PC-9 (cell line): ENCODE measurements at regions of chr2 and their contacts with region 1.

Region 1: DNA sequence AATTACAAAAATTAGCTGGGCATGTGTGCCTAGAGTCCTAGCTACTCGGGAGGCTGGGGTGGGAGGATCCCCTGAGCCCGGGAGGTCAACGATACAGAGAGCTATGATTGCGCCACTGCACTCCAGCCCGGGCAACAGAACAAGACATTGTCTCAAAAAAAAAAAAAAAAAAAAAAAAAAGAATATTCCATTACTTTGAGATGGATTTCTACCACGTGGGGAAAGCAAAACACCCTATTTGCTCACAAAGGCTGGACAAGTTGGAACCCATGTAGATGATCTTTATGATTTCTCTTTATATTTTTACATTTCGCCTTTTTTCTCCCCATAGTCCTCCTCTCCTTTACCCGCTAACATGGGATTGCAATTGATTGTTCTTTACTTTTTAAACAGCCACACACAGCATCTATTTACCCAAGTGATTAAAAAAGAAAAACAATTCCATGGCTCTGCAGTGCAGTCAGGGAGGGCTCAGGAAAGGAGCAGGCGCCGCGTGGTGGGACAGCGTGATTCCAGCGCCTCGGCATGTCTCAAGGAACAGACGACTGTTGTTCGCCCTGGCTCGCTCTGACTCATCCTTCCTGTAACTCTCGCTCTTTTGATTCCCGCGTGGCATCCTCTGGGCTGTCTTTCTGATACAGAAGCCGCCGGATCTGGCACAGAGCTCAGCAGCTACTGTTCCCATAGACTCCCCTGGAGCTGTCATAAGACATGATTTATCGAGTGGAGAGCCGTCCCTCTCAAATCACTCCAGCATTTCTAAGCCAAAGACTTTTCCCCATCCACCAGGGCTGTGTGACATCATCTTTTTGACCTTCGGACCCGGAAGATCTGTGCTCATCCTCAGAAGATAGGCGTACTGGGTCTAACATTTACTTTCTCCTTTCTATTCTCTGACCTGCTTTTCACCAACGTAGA is 230.4 kb upstream of the AGAP1 start:
- DNase-seq: peak; percentile 67 to 73
- H3K4me3 ChIP-seq: peak overlapping the region; percentile 20; the same call in 1 of the 2 replicates
- H3K27ac ChIP-seq: no peak overlapping the region
- H3K4me1 ChIP-seq: peaks cover 23% of the 10 kb centered on the region
- H3K27me3 ChIP-seq: no peaks in the 10 kb centered on the region
- CTCF ChIP-seq: no peak

Region 2: DNA sequence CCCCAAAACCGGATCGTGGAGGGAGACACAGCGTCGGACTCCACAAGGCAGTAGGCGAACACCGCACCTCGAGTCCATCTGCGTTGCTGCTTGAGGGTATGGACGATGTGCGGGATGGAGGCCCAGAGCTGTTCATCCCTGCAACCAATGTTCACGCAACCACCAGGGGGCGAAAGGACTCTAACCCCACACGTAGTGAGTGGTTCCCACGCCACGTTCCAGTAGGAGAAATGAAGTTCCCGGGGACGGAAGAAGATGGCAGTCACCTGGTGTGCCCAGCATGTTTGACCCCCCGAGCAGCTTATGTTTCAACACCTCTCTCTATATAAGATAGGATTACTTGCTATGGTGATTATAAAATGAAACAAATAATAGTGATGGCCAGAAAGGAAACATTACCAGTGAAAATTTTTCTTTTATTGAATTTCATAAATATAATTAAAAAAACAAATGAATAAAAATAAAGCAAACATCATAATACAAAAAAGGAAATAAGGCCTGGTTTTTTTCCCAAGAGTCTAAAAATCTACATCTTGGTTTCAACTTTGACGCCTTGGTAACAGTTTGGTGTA is 127.4 kb before region 1 on chr2:
- CTCF ChIA-PET with region 1: interaction called, 3 read pairs
- POLR2A ChIA-PET with region 1: no interaction called
- intact Hi-C with region 1: loop called (anchors 10 kb)
- DNase-seq: peak; percentile 78 to 86
- H3K4me3 ChIP-seq: no peak overlapping the region
- H3K27ac ChIP-seq: no peak overlapping the region
- H3K4me1 ChIP-seq: no peaks in the 10 kb centered on the region
- H3K27me3 ChIP-seq: no peaks in the 10 kb centered on the region
- CTCF ChIP-seq: peak; percentile 94